Activated CD8-positive, alpha-beta memory T cell treated with anti-CD3 and anti-CD28 coated beads, Interleukin-2, amount 10 ng/mL, durations not matched to agents 7 days and 5 days (primary cell): ENCODE measurements at regions of chr14 and their contacts with region 1.

Region 1: DNA sequence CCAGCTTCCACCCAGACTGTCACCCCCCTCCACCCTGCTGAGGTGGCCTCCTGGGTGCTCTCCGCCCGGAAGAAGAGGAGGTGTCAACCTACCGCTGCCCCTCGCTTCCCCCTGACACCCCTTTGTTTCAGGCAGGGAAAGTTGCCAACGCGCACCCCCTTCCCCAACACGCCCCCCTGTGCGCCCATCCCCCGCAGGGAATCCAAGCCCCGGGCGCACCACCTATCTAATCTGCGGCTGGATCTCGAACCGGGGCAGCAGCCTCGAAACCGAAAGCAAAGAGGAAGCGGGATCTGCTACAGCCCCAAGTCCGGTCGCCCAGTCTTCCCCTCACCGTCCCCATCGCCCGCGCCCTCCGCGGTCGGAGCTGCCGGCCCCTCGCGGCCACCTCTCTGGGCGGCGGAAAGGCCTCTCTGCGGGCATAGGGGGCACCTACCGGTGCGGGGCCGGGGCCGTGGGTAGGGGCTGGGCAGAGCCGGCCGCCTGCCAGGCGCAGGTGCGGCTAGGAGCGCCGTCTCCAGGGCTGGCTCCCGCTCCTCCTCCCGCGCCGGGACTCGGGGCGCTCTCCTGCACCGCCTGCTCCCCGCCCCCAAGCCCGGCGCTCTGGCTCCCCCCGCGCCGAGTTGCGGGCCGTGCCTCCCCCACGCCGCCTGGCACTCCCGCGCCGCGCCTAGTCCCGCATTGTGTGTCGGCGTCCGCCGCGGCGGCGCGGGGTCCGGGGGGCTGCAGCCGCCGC is 18.3 kb upstream of the PLEKHH1 start:
- DNase-seq: peak; percentile 65
- ATAC-seq: peak; percentile 74
- H3K4me3 Mint-ChIP-seq: peak overlapping the region; percentile 76
- H3K27ac Mint-ChIP-seq: peak overlapping the region; percentile 71
- H3K4me1 Mint-ChIP-seq: peaks cover 15% of the 10 kb centered on the region
- H3K27me3 Mint-ChIP-seq: peaks cover 56% of the 10 kb centered on the region

Region 2: GRCh38 chr14:67526676-67527459 is 12.1 kb after region 1 on chr14:
- CTCF ChIA-PET with region 1: interaction called, 21 read pairs
- DNase-seq: peak; percentile 58
- ATAC-seq: peak; percentile 90
- H3K4me3 Mint-ChIP-seq: no peak overlapping the region
- H3K27ac Mint-ChIP-seq: no peak overlapping the region
- H3K4me1 Mint-ChIP-seq: no peaks in the 10 kb centered on the region
- H3K27me3 Mint-ChIP-seq: peaks cover 73% of the 10 kb centered on the region

Region 3: DNA sequence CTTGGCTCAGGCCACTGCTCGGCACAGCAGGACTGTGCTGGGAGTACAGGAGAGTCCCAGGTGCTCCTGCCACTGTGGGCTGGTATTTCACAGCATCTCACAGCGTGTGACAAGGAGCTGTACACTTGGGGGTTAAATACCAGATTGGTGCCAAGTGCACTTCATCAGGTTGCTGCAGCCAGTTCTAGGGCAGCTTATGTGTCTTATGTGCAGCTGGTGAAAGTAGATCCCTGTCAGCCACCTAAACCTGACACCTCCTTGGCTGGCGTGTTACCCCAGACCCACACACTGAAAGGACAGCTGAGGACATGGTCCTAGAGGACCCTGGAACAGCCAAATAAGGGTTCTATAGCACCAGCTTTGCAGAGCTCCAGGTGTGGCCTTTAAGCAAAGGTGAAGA is 37.1 kb after region 1 on chr14:
- CTCF ChIA-PET with region 1: no interaction called
- DNase-seq: no peak
- ATAC-seq: no peak
- H3K4me3 Mint-ChIP-seq: no peak overlapping the region
- H3K27ac Mint-ChIP-seq: no peak overlapping the region
- H3K4me1 Mint-ChIP-seq: peaks cover under 1% of the 10 kb centered on the region
- H3K27me3 Mint-ChIP-seq: peaks cover 15% of the 10 kb centered on the region